ENCODE measurements at regions of chr1 and their contacts with region 1.

Region 1: GRCh38 chr1:35876988-35877387 is 6.0 kb upstream of the AGO1 start:
- DNase-seq: no peak
- H3K4me3 ChIP-seq: no peak overlapping the region
- H3K27ac ChIP-seq: no peak overlapping the region
- H3K4me1 ChIP-seq: no peaks in the 10 kb centered on the region
- H3K27me3 ChIP-seq: no peaks in the 10 kb centered on the region
- CTCF ChIP-seq: no peak

Region 2: GRCh38 chr1:35834218-35834617 is 42.8 kb before region 1 on chr1:
- CTCF ChIA-PET with region 1: interaction called, 10 read pairs
- POLR2A ChIA-PET with region 1: no interaction called
- intact Hi-C with region 1: no loop called
- DNase-seq: no peak
- H3K4me3 ChIP-seq: no peak overlapping the region
- H3K27ac ChIP-seq: no peak overlapping the region
- H3K4me1 ChIP-seq: no peaks in the 10 kb centered on the region
- H3K27me3 ChIP-seq: no peaks in the 10 kb centered on the region
- CTCF ChIP-seq: no peak

Region 3: GRCh38 chr1:35973536-35974200 is 96.7 kb after region 1 on chr1:
- CTCF ChIA-PET with region 1: no interaction called
- POLR2A ChIA-PET with region 1: interaction called, 11 read pairs
- intact Hi-C with region 1: no loop called
- DNase-seq: no peak
- H3K4me3 ChIP-seq: no peak overlapping the region
- H3K27ac ChIP-seq: no peak overlapping the region
- H3K4me1 ChIP-seq: no peaks in the 10 kb centered on the region
- H3K27me3 ChIP-seq: no peaks in the 10 kb centered on the region
- CTCF ChIP-seq: no peak

Measured in A673 (cell line).